HepG2 (cell line): ENCODE measurements at regions of chr1 and their contacts with region 1.

Region 1: DNA sequence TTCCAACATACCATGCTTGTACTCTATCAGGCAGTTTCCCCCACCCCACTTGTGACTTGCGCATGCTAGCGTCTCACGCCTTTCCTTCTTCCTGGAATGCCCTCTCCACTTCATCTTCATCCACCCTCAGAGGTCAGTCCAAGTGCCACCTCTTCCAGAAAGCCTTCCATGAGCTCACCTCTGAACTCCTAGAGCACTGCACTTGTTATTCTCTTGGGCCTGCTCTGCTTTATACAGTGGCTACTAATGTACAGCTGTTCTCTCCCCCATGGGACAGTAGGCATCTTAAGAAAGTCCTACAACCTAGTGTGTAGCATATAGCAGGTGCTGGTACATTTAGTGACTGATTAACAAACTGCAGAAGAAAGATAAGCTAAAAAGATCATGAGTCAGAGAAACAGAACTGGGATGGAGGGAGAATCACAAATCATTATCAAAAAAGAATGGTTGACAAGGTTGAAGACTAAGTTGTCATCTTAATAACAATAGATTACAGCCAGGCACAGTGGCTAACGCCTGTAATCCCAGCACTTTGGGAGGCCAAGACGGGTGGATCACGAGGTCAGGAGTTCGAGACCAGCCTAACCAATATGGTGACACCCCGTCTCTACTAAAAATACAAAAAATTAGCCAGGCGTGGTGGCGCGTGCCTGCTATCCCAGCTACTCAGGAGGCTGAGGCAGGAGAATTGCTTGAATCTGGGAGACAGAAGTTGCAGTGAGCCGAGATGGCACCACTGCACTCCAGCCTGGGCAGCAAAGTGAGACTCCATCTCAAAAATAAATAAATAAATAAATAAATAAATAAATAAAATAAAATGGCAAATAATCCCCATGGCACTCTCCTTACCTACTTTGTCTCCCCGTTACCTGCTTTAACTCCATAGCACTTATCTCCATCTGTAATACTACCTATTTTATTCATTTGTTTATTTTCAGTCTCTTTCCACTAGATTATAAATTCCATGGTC is 16.3 kb upstream of the TSPAN1 start:
- DNase-seq: no peak
- ATAC-seq: no peak
- H3K4me3 ChIP-seq: no peak overlapping the region
- H3K27ac ChIP-seq: no peak overlapping the region
- H3K4me1 ChIP-seq: peaks cover 15% of the 10 kb centered on the region
- H3K27me3 ChIP-seq: peaks cover 0 to 5% of the 10 kb centered on the region in 2 experiments; a peak in 1 of 5 replicates
- CTCF ChIP-seq: no peak
- EP300 ChIP-seq: no peak
- POLR2A ChIP-seq: no peak
- RAD21 ChIP-seq: no peak

Region 2: DNA sequence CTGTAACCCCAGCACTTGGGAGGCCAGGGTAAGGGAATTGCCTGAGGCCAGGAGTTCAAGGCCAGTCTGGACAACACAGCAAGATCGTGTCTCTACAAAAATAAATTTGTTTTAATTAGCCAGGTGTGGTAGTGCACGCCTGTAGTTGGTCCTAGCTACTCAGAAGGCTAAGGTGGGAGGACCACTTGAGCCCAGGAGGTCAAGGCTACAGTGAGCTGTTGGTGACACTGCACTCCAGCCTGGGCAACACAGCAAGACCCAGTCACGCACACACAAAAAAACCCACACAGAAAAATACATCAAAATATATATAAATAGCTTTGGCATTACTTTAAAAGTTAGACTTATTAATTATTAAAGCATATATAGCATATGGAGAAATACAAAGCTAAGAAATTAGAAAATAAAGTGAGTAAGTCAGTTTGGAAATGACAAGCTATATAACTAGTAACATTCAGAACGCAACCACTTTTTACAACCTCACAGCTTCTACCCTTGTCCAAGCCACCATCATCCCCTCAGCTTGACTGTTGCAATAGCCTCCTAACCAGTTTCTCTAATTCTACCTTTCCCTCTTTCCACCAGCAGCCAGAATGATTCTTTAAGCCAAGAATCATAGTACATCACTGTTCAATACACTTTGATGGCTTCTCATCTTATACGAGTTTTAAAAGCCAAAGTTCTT is 40.6 kb before region 1 on chr1:
- CTCF ChIA-PET with region 1: no interaction called
- POLR2A ChIA-PET with region 1: no interaction called
- in situ Hi-C with region 1: no loop called
- intact Hi-C with region 1: loop called (anchors 2 kb)
- DNase-seq: no peak
- ATAC-seq: no peak
- H3K4me3 ChIP-seq: no peak overlapping the region
- H3K27ac ChIP-seq: no peak overlapping the region
- H3K4me1 ChIP-seq: peaks cover 15% of the 10 kb centered on the region
- H3K27me3 ChIP-seq: no peaks in the 10 kb centered on the region
- CTCF ChIP-seq: no peak
- EP300 ChIP-seq: no peak
- POLR2A ChIP-seq: no peak
- RAD21 ChIP-seq: no peak

Region 3: DNA sequence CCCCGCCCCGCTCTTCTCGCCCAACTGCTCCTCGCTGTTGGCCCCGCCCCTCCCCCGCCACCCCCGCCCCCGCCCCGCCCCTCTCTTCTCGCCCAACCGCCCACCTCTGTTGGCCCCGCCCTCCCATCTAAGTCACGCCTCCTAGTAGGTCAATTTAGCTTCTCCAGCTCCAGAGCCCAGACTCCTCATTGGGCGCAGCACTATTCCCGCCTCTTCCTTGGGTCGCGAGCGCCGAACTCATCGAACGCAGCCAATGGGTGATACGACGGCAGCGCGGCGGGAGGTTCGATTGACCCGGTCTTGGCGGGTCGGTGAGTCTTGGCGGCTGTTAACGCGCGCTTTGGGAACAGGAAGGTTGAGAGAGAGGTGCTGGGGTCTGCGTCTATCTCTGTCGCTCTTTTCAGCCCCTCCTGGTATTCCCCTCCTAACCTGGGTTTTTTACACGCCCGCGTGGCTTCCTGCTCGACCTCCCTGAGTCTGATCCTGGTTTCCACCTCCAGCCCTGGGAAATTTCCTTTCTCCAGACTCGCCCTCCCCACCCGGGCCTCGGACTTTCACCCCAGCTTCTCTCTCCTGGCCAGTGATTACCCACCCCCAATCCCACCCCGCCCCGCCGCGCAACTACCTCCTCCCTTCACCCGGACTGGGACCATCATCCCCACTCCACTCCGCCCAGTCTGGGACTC is 89.0 kb after region 1 on chr1 and contains the start of gene RAD54L:
- CTCF ChIA-PET with region 1: no interaction called
- POLR2A ChIA-PET with region 1: no interaction called
- in situ Hi-C with region 1: no loop called
- intact Hi-C with region 1: no loop called
- DNase-seq: peak; percentile 97
- ATAC-seq: peak; percentile 89
- H3K4me3 ChIP-seq: peak within 1 kb of the TSS; percentile 85 to 88 (median 85)
- H3K27ac ChIP-seq: peak within 1 kb of the TSS; percentile 92
- H3K4me1 ChIP-seq: peaks cover 69% of the 10 kb centered on the region
- H3K27me3 ChIP-seq: no peaks in the 10 kb centered on the region; a peak in 1 of 5 replicates
- CTCF ChIP-seq: 0 out of 2 replicates have a peak, but pooled peaks have one; percentile 5
- EP300 ChIP-seq: no peak
- POLR2A ChIP-seq: peak; percentile 72 to 93
- RAD21 ChIP-seq: 0 out of 2 replicates have a peak, but pooled peaks have one; percentile 9
- total RNA-seq, gene RAD54L: 30.0 and 30.1 TPM in 2 replicates